Activated CD4-positive, alpha-beta memory T cell treated with anti-CD3 and anti-CD28 coated beads, Interleukin-2, amount 10 ng/mL, durations not matched to agents 7 days and 5 days (primary cell): ENCODE measurements at regions of chr2 and their contacts with region 1.

Region 1: GRCh38 chr2:135820003-135820618 is 16.9 kb downstream of the LCT start:
- DNase-seq: peak; percentile 87
- H3K4me3 Mint-ChIP-seq: peak overlapping the region; percentile 48
- H3K27ac Mint-ChIP-seq: peak overlapping the region; percentile 78
- H3K4me1 Mint-ChIP-seq: peaks cover 35% of the 10 kb centered on the region
- H3K27me3 Mint-ChIP-seq: peaks cover 2% of the 10 kb centered on the region

Region 2: GRCh38 chr2:134586326-134586965 is 1233.7 kb before region 1 on chr2:
- CTCF ChIA-PET with region 1: no interaction called
- POLR2A ChIA-PET with region 1: no interaction called
- DNase-seq: no peak
- H3K4me3 Mint-ChIP-seq: no peak overlapping the region
- H3K27ac Mint-ChIP-seq: no peak overlapping the region
- H3K4me1 Mint-ChIP-seq: peaks cover 35% of the 10 kb centered on the region
- H3K27me3 Mint-ChIP-seq: peaks cover 3% of the 10 kb centered on the region

Region 3: DNA sequence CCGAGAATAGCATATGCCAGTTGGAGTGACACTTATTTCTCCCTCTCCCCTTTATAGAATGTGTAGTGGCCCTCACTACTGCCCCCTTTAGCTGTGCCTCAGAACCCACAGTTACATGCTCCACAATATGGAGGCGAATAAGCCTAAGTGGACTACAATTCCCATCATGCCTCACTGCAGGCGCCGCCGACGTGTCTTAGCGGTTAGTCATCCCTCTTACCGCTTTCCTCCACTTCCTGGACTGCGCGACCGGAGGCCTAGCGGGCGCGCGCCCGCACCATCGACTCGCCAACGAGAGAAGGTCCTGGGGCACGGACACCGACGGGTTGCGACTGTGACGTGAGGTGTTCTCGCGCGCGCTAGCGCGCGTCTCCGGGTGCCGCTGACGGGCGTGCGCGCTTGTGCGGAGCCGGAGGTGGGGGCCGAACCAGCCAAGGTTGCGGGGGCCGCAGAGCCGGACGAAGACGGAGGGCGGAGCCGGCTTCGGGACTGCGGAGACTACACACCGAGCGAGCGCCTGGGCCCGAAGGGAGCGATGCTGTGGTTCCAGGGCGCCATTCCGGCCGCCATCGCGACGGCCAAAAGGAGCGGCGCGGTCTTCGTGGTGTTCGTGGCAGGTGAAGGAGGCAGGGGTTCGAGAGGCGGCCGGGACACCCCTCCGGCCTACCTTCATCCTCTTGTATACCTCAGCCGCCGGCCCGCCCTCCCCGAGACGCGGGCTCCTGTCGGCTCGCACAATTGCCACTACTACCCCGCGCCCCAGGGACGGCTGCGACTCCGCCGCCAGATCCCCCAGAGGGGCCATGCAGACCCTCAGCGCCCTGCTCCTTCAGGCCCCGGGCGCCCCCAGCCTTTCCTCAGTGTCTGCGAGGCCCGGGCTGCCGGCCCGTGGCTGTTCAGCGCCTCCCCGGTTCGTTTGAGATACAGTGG is 78.5 kb before region 1 on chr2 and contains the start of gene UBXN4:
- CTCF ChIA-PET with region 1: no interaction called
- POLR2A ChIA-PET with region 1: interaction called, 13 read pairs
- DNase-seq: peak; percentile 97
- H3K4me3 Mint-ChIP-seq: peak within 1 kb of the TSS; percentile 98
- H3K27ac Mint-ChIP-seq: peak within 1 kb of the TSS; percentile 100
- H3K4me1 Mint-ChIP-seq: peaks cover 34% of the 10 kb centered on the region
- H3K27me3 Mint-ChIP-seq: no peaks in the 10 kb centered on the region
- total RNA-seq, gene UBXN4: 118 to 126 TPM